Vagina (tissue), 2 donors: ENCODE measurements at regions of chr12 and their contacts with region 1.

Region 1: GRCh38 chr12:49121047-49121696 is 10.0 kb downstream of the TUBA1B start:
- DNase-seq: no peak
- H3K4me3 ChIP-seq: no peak overlapping the region
- H3K27ac ChIP-seq: no peak overlapping the region
- H3K4me1 ChIP-seq: no peaks in the 10 kb centered on the region
- H3K27me3 ChIP-seq: no peaks in the 10 kb centered on the region
- CTCF ChIP-seq: peak in 2 of 3 experiments; percentile 12 to 16
- POLR2A ChIP-seq: no peak

Region 2: GRCh38 chr12:49069507-49070346 is 51.4 kb before region 1 on chr12 and contains the start of gene RHEBL1:
- intact Hi-C with region 1: loop called (anchors 10 kb)
- DNase-seq: peak in 1 of 2 donors; percentile 98
- H3K4me3 ChIP-seq: peak within 1 kb of the TSS; percentile 59
- H3K27ac ChIP-seq: peak within 1 kb of the TSS; percentile 72
- H3K4me1 ChIP-seq: peaks cover 13% of the 10 kb centered on the region
- H3K27me3 ChIP-seq: no peaks in the 10 kb centered on the region
- CTCF ChIP-seq: peak in 2 of 3 experiments; percentile 2 to 18
- POLR2A ChIP-seq: no peak
- total RNA-seq, gene RHEBL1: 1.7 TPM

Region 3: DNA sequence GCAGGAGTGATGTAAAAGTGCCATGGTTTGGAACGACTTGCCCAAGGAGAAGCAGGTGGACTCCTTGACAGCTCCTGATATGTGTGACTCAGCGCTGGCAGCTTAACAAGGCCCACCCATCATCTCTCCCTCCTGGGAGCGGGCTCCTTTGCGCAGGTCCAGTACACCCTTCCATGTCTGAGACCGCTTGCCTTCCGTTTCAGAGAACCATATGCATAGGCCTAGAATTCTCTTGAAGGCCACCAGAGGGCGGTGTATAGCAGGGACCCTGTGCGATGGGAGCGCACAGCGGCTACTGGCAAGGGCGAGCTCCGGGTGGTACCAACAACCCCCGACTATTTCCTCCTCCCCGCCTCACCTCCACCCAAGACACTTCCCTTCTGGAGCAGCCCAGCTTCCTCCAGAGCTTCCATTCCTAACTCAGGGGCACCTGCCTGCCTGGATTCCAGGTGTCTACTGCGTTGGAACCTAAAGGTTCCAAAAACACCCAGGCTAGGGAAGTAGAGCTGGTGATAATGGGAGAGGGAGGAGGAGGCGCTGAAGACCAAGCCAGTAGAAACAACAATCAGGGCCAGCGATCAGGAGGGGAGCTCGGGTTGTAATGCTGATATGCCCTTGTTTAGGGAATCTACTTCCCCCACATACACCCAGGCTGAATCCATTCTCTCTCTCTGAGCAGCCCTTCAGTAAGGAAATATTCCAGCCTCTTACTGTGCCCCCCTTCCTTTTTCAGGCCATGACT is 32.8 kb before region 1 on chr12:
- intact Hi-C with region 1: loop called (anchors 2 kb)
- DNase-seq: peak in 1 of 2 donors; percentile 92
- H3K4me3 ChIP-seq: peak overlapping the region in 1 of 2 donors; percentile 31
- H3K27ac ChIP-seq: peak overlapping the region; percentile 11
- H3K4me1 ChIP-seq: peaks cover 41% of the 10 kb centered on the region
- H3K27me3 ChIP-seq: no peaks in the 10 kb centered on the region
- CTCF ChIP-seq: peak; percentile 66 to 84 (median 80)
- POLR2A ChIP-seq: no peak

Region 4: GRCh38 chr12:49105608-49106007 is 15.6 kb before region 1 on chr12:
- intact Hi-C with region 1: loop called (anchors 2 kb)
- DNase-seq: no peak
- H3K4me3 ChIP-seq: no peak overlapping the region
- H3K27ac ChIP-seq: peak overlapping the region; percentile 7
- H3K4me1 ChIP-seq: peaks cover 56% of the 10 kb centered on the region
- H3K27me3 ChIP-seq: no peaks in the 10 kb centered on the region
- CTCF ChIP-seq: no peak
- POLR2A ChIP-seq: no peak